ENCODE measurements at regions of chr19 and their contacts with region 1.

Region 1: GRCh38 chr19:58572818-58573657 is at the start of gene MZF1:
- DNase-seq: peak; percentile 100
- ATAC-seq: peak; percentile 69
- H3K4me3 Mint-ChIP-seq: peak within 1 kb of the TSS; percentile 95
- H3K27ac Mint-ChIP-seq: peak within 1 kb of the TSS; percentile 100
- H3K4me1 Mint-ChIP-seq: peaks cover 38% of the 10 kb centered on the region
- H3K27me3 Mint-ChIP-seq: no peaks in the 10 kb centered on the region
- total RNA-seq, gene MZF1: 14.3 to 15.0 TPM

Region 2: DNA sequence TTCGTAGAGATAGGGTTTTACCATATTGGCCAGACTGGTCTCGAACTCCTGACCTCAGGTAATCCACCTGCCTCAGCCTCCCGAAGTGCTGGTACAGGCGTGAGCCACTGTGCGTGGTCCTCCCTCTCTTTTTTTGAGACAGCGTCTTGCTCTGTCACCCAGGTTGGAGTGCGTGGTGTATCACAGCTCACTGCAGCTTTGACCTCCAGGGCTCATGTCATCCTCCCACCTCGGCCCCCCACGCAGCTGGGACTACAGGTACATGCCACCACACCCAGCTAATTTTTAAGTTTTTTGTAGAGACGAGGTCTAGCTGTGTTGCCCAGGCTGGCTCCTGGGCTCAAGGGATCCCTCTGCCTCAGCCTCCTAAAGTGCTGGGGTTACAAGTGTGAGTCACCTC is 493.2 kb before region 1 on chr19:
- CTCF ChIA-PET with region 1: no interaction called
- POLR2A ChIA-PET with region 1: no interaction called
- intact Hi-C with region 1: no loop called
- DNase-seq: no peak
- ATAC-seq: no peak
- H3K4me3 Mint-ChIP-seq: no peak overlapping the region
- H3K27ac Mint-ChIP-seq: no peak overlapping the region
- H3K4me1 Mint-ChIP-seq: no peaks in the 10 kb centered on the region
- H3K27me3 Mint-ChIP-seq: no peaks in the 10 kb centered on the region

Region 3: DNA sequence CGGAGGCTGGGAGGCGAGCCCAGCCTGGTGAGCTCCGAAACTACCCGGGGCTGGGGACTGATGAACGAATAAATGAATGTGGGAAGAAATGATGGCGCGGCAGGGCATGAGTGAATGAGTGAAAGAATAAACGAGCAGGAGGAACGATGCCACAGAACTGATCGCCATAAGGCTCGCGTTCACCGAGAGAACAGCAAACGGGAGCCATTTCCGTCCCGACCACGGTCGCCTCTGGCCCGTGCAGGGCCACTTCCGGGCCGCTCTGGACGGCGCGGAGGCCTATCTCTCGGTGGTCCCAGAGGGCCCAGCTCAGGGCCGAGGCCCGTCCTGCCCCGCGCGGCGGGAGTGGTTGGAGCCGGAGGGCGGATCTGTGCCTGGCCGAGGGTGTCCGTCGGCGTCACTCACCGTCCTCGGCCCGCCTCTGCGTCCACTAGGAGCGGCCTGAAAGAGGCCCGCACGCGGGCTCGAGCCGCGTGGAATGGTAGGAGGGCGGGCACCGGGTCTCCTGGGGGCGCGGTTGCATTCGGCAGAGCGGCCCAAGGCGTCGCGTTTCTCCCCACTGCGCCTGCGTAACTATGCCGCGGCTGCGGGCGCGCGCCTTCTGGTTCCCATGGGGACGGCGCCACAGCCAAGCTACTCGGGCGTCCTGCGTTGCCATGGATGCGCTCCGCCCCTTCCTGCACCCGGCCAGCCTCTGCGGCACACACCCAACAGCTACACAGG is 210.6 kb before region 1 on chr19 and contains the start of gene ZNF497:
- CTCF ChIA-PET with region 1: no interaction called
- POLR2A ChIA-PET with region 1: no interaction called
- intact Hi-C with region 1: no loop called
- DNase-seq: peak; percentile 99
- ATAC-seq: peak; percentile 94
- H3K4me3 Mint-ChIP-seq: peak within 1 kb of the TSS; percentile 86
- H3K27ac Mint-ChIP-seq: peak within 1 kb of the TSS; percentile 93
- H3K4me1 Mint-ChIP-seq: peaks cover 7% of the 10 kb centered on the region
- H3K27me3 Mint-ChIP-seq: no peaks in the 10 kb centered on the region
- total RNA-seq, gene ZNF497: 1.1 to 1.5 TPM

Region 4: DNA sequence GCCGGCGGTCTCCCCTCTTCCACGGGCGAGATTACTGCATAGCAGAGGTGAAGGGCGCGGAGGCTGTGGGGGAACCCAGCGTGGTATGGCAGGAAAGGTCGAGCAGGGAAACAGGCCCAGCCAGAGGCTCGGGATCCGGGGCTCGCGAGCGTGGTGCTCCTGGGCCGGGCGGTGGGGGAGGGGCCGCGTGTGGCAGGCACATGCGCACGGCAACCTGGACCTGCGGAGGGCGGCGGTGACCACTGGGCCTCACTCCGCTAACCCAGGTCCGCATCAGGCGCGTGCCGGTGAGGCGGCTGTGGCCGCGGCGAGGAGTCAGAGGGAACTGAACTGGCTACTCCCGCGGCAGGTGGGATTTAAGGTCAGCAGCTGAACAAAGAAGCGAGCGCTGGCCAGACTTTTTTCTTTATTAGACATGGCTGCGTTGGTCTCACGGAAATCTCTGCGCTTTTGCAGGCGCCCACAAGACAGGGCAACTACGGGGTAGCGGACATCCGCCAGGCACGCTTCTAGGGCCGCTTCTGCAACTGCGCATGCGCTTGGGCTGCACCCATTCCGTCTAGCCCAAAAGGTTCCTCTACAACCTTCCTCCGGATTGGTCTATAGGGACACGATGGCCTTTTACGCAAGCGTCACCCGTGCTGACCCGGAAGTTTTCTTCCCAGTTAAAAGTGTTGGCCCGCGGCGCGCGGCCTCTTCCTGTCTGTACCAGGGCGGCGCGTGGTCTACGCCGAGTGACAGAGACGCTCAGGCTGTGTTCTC is 186.3 kb before region 1 on chr19 and contains the start of gene RPS5:
- CTCF ChIA-PET with region 1: no interaction called
- POLR2A ChIA-PET with region 1: interaction called, 3 read pairs
- intact Hi-C with region 1: loop called (anchors 1 kb)
- DNase-seq: peak; percentile 97
- ATAC-seq: peak; percentile 96
- H3K4me3 Mint-ChIP-seq: peak within 1 kb of the TSS; percentile 96
- H3K27ac Mint-ChIP-seq: peak within 1 kb of the TSS; percentile 97
- H3K4me1 Mint-ChIP-seq: peaks cover 33% of the 10 kb centered on the region
- H3K27me3 Mint-ChIP-seq: no peaks in the 10 kb centered on the region
- total RNA-seq, gene RPS5: 1,234 to 1,535 TPM

Region 5: DNA sequence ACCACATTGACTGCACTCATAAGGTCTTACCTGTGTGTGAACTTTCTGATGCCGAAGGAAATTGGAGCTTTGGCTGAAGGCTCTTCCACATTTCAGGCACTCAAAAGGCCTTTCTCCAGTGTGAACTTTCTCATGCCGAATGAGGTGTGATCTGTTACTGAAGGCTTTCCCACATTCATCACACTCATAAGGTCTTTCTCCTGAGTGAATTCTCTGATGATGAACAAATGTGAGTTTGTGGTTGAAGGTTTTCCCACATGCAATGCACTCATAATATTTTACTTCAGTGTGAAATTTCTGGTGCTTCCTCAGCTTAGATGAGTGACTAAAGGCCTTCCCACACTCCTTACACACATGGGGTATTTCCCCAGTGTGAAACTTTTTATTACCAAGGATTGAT is 138.8 kb before region 1 on chr19:
- CTCF ChIA-PET with region 1: no interaction called
- POLR2A ChIA-PET with region 1: no interaction called
- intact Hi-C with region 1: no loop called
- DNase-seq: no peak
- ATAC-seq: no peak
- H3K4me3 Mint-ChIP-seq: no peak overlapping the region
- H3K27ac Mint-ChIP-seq: no peak overlapping the region
- H3K4me1 Mint-ChIP-seq: peaks cover 14% of the 10 kb centered on the region
- H3K27me3 Mint-ChIP-seq: no peaks in the 10 kb centered on the region

Region 6: DNA sequence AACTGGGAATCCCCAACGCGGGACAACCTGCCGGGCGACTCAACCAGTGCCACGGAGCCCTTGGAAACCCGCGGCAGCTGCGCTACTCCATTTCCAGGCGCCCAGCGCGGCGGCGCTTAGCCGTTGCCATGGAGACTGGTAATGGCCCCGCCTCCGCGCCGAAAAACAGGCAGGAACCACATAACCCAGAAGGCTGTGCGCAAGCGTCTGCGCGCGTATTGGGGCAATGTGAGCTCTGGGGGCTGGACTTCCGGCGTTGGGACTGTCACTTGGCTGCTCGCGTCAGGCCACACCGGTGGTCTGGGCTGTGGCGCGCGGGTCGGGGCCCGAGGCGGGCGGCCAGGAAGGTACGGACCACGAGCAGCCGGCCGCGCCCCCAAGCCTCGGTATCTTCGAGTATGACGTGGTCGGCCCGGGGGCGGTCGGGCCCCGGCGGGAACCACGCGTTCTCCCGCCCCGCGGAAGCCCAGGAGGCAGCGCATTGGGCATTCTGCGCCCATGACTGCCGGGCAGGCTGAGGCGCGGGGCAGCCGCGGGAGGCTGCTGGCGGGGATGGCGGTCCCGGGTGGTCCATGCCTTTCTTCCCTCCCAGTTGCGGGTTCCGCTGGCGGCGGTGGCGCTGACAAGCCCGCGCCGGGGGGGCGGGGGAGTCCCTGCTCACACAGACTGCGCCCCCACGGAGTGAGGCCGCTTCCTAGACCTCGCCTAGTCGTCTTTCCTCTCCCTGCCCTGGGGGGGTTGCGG is 121.5 kb before region 1 on chr19 and contains the start of gene ZNF324B:
- CTCF ChIA-PET with region 1: no interaction called
- POLR2A ChIA-PET with region 1: no interaction called
- intact Hi-C with region 1: loop called in 1 of 2 experiments (anchors 1 kb)
- DNase-seq: peak; percentile 98
- ATAC-seq: peak; percentile 99
- H3K4me3 Mint-ChIP-seq: peak within 1 kb of the TSS; percentile 77
- H3K27ac Mint-ChIP-seq: peak within 1 kb of the TSS; percentile 55
- H3K4me1 Mint-ChIP-seq: peaks cover 25% of the 10 kb centered on the region
- H3K27me3 Mint-ChIP-seq: peaks cover 15% of the 10 kb centered on the region
- total RNA-seq, gene ZNF324B: 5.8 to 7.5 TPM

Region 7: DNA sequence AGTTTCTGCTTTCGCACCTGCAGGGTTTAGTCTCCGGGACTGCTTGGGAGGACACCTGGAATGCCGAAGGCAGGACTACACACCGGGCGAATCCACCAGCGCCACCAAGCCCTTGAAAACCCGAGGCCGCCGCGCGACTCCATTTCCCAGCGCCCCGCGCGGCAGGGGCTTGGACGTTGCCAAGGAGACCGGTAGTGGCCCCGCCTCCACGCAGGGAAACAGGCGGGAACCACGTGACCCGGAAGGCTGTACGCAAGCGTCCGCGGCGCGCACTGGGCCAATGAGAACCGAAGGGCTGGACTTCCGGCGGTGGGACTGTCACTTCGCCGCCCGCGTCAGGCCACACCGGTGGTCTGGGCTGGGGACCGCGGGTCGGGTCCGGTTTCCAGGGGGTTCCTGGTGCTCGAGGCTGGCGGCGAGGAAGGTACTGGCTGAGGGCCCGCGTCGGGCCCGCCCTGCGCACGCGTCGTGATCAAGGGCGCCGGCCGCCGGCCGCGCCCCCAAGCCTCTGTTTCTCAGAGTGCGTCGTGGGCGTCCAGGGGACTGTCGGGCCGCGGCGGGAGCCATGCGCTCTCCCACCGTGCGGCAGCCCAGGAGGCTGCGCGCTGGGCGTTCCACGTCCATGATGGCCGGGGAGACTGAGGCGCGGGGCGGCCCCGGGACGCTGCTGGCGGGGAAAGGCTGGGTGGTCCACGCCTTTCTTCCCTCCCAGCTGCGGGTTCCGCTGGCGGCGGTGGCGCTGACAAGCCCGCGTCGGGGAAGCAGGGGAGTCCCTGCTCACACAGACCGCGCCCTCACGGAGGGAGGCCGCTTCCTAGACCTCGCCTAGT is 106.1 kb before region 1 on chr19 and contains the start of gene ZNF324:
- CTCF ChIA-PET with region 1: no interaction called
- POLR2A ChIA-PET with region 1: no interaction called
- intact Hi-C with region 1: loop called in 1 of 2 experiments (anchors 1 kb)
- DNase-seq: peak; percentile 99
- ATAC-seq: peak; percentile 98
- H3K4me3 Mint-ChIP-seq: peak within 1 kb of the TSS; percentile 86
- H3K27ac Mint-ChIP-seq: peak within 1 kb of the TSS; percentile 47
- H3K4me1 Mint-ChIP-seq: peaks cover 22% of the 10 kb centered on the region
- H3K27me3 Mint-ChIP-seq: peaks cover 2% of the 10 kb centered on the region
- total RNA-seq, gene ZNF324: 4.7 to 7.5 TPM

Region 8: DNA sequence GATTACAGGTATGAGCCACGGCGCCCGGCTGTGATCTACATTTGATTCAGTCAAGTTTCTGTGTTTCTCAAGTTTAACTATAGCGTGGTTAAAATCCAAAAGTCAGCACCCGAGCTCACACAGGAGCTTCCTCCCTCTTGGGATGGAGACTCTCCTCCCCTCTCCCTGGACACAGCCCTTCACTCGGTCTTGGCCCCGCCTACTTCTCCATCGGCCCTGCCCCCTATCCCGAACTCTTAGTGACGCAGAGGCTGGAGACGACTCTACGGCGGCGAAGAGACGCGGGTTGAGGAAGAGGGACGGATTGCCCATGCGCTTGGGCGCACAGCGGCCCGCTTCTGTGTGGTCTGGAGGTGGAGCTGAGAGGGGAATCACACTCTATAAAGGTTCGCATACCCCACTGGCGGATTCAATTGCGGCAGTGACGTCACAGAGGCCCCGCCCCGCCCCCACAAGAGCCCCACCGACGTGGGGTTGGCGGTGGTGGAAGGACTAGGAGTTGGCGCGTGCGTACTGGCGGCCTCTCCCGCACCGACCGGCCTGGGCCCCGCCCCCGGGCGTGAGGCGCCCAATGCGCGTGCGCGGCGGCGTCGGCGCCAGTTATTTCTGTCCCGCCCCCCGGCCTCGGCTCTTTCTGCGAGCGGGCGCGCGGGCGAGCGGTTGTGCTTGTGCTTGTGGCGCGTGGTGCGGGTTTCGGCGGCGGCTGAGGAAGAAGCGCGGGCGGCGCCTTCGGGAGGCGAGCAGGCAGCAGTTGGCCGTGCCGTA is 29.0 kb before region 1 on chr19 and contains the start of gene TRIM28:
- CTCF ChIA-PET with region 1: no interaction called
- POLR2A ChIA-PET with region 1: interaction called, 7 read pairs
- intact Hi-C with region 1: loop called (anchors 1 kb)
- DNase-seq: peak; percentile 100
- ATAC-seq: peak; percentile 98
- H3K4me3 Mint-ChIP-seq: peak within 1 kb of the TSS; percentile 96
- H3K27ac Mint-ChIP-seq: peak within 1 kb of the TSS; percentile 97
- H3K4me1 Mint-ChIP-seq: peaks cover 34% of the 10 kb centered on the region
- H3K27me3 Mint-ChIP-seq: peaks cover 4% of the 10 kb centered on the region
- total RNA-seq, gene TRIM28: 481 to 758 TPM

Region 9: DNA sequence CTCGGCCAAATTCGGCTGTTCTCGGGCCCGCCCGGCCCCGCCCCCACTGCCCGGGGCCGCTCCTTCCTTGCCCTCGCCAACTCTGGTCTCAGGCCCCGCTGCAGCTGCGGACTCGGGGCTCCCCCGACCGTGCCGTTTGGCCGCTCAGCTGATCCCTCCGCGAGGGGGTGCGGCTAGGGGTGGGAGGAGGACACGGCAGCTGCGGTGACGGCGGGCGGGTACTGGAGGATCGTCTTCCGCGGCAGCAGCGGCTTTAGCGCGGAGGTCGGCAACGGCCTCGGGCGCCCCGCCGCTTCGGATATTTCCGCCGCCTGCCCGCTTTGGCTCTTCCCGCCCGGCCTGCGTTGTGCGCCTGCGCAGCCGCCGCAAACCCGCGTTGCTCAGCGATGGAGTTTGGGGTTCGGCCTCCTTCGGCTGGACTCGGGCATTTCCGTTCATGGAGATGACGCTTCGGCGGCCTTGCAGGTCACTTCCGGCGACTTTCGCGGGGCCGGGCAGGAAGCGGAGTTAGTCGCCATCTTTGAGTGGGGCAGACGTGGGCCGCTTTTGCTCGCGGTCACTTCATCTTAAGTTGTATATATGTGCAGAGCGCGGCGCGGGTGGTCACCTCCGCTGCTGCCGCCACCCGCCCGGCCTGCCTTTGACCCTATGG is 14.3 kb before region 1 on chr19:
- CTCF ChIA-PET with region 1: interaction called, 4 read pairs
- POLR2A ChIA-PET with region 1: interaction called, 9 read pairs
- intact Hi-C with region 1: loop called (anchors 1 kb)
- DNase-seq: peak; percentile 100
- ATAC-seq: peak; percentile 69
- H3K4me3 Mint-ChIP-seq: peak overlapping the region; percentile 92
- H3K27ac Mint-ChIP-seq: peak overlapping the region; percentile 100
- H3K4me1 Mint-ChIP-seq: peaks cover 65% of the 10 kb centered on the region
- H3K27me3 Mint-ChIP-seq: no peaks in the 10 kb centered on the region

Measured in activated CD4-positive, alpha-beta T cell treated with anti-CD3 and anti-CD28 coated beads for 36 hours (primary cell).